Aorta (tissue), 5 donors: ENCODE measurements at regions of chr16 and their contacts with region 1.

Region 1: DNA sequence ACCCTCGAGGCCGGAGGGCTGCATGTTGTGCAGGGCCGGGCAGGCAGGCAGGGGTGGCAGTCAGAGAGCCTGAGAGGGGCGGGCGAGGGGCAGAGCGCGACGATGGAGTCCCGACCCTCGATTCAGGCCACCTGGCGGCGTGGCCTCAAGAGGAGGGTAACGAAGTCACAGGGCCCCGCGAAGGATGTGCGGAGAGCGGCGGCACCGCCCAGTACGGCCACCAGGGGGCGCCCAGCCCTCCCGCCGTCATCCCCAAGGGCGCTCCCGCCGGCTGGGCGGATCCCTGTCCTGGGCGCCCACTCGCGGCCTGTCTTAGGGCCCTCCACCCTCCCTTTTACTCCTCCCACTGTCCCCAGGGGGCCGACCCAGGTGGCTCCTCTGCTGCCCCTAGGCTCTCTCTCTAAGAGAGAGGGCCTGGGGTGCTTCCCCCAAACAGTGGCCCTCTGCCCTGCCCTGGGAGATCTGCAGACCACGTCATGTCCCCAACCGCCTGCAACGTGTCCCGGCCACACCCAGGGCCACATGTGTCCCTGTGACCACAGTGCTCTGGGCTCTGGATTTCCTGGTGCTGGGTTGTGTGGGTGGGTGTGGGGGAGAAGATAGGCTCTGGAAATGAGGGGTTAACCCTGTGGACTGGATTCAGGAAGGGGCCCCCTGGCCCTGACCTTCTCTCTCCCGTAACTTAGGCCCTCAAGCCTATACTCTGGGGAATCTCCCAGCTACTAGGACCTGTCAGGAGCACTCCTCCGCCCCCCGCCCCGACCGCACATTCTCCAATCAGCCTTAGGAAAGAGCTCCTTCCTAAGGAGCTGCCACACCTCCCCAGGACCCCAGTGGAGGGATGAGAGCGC is 5.9 kb downstream of the DPEP2 start:
- DNase-seq: peak; percentile 90 to 93
- ATAC-seq: peak; percentile 95
- H3K4me3 ChIP-seq: no peak overlapping the region
- H3K27ac ChIP-seq: no peak overlapping the region
- H3K4me1 ChIP-seq: no peaks in the 10 kb centered on the region
- H3K27me3 ChIP-seq: no peaks in the 10 kb centered on the region

Region 2: GRCh38 chr16:68040507-68041288 is 47.3 kb after region 1 on chr16:
- intact Hi-C with region 1: loop called in 1 of 2 experiments (anchors 2 kb)
- DNase-seq: peak; percentile 85 to 95
- ATAC-seq: peak; percentile 93
- H3K4me3 ChIP-seq: no peak overlapping the region
- H3K27ac ChIP-seq: no peak overlapping the region
- H3K4me1 ChIP-seq: no peaks in the 10 kb centered on the region
- H3K27me3 ChIP-seq: no peaks in the 10 kb centered on the region

Region 3: GRCh38 chr16:68061396-68061795 is 68.0 kb after region 1 on chr16:
- intact Hi-C with region 1: no loop called
- DNase-seq: no peak
- ATAC-seq: no peak
- H3K4me3 ChIP-seq: no peak overlapping the region
- H3K27ac ChIP-seq: no peak overlapping the region
- H3K4me1 ChIP-seq: peaks cover 2 to 5% of the 10 kb centered on the region in 2 donors
- H3K27me3 ChIP-seq: no peaks in the 10 kb centered on the region

Region 4: GRCh38 chr16:68229431-68230198 is 236.2 kb after region 1 on chr16:
- intact Hi-C with region 1: loop called (anchors 1 to 2 kb)
- DNase-seq: peak in 1 of 2 donors; percentile 43
- ATAC-seq: peak; percentile 53
- H3K4me3 ChIP-seq: no peak overlapping the region
- H3K27ac ChIP-seq: no peak overlapping the region
- H3K4me1 ChIP-seq: no peaks in the 10 kb centered on the region
- H3K27me3 ChIP-seq: no peaks in the 10 kb centered on the region